ENCODE measurements at regions of chr5 and their contacts with region 1.

Region 1: DNA sequence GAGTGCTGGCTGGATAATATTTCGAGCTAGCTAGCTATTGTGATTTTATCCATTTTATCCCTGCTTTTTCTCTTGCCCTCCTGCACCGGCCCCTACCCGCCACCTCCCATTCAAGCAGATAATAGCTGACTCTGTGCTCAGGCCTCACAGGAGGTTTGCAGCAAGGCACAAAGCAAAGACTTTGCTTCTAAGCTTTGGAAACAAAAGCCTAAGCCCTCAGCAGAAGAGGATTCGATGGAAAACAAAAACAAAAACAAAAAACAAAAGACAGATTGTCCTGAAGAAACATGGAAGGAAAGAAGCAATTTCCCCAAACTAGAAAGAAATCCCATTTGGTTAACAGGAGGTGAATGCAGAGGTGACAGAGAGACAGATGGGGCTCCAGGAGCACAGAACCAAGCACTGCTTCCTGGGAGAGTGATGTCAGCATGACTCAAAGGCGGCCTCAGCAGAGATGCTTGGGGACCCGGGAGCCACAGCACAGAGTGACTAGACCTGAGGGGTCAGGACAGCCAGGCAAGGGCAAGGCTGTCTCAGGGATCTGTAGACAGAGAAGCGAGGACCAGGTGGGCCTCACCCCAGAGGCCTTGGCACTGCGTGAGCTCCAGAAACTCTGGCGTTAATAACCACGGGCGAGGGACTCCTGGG is 28.4 kb downstream of the MTX3 start:
- DNase-seq: no peak
- H3K4me3 Mint-ChIP-seq: no peak overlapping the region
- H3K27ac Mint-ChIP-seq: peak overlapping the region; percentile 84
- H3K4me1 Mint-ChIP-seq: peaks cover 28% of the 10 kb centered on the region
- H3K27me3 Mint-ChIP-seq: no peaks in the 10 kb centered on the region

Region 2: GRCh38 chr5:79982136-79982535 is 19.4 kb after region 1 on chr5:
- intact Hi-C with region 1: loop called (anchors 1 kb)
- DNase-seq: no peak
- H3K4me3 Mint-ChIP-seq: peak overlapping the region; percentile 41
- H3K27ac Mint-ChIP-seq: peak overlapping the region; percentile 74
- H3K4me1 Mint-ChIP-seq: peaks cover 58% of the 10 kb centered on the region
- H3K27me3 Mint-ChIP-seq: no peaks in the 10 kb centered on the region

Region 3: GRCh38 chr5:80037366-80037765 is 74.7 kb after region 1 on chr5:
- intact Hi-C with region 1: loop called (anchors 1 kb)
- DNase-seq: no peak
- H3K4me3 Mint-ChIP-seq: peak overlapping the region; percentile 45
- H3K27ac Mint-ChIP-seq: no peak overlapping the region
- H3K4me1 Mint-ChIP-seq: peaks cover 30% of the 10 kb centered on the region
- H3K27me3 Mint-ChIP-seq: peaks cover 38% of the 10 kb centered on the region

Region 4: GRCh38 chr5:81393783-81394718 is 1431.4 kb after region 1 on chr5 and contains the start of gene ACOT12:
- intact Hi-C with region 1: no loop called
- DNase-seq: no peak
- H3K4me3 Mint-ChIP-seq: peak within 1 kb of the TSS; percentile 33
- H3K27ac Mint-ChIP-seq: no peak within 1 kb of the TSS
- H3K4me1 Mint-ChIP-seq: peaks cover 5% of the 10 kb centered on the region
- H3K27me3 Mint-ChIP-seq: peaks cover 46% of the 10 kb centered on the region
- total RNA-seq, gene ACOT12: not detected in 2 replicates

Measured in activated T-helper 2 cell treated with anti-CD3 and anti-CD28 coated beads, Interferon-gamma antibody, Interleukin-2, Interleukin-4, amounts not matched to agents 10 μg/mL and 5 μg/mL and 100 μg/mL, durations not matched to agents 14 hours and 24 hours and 36 hours (primary cell).